GM12878 (cell line): ENCODE measurements at regions of chr14 and their contacts with region 1.

Region 1: DNA sequence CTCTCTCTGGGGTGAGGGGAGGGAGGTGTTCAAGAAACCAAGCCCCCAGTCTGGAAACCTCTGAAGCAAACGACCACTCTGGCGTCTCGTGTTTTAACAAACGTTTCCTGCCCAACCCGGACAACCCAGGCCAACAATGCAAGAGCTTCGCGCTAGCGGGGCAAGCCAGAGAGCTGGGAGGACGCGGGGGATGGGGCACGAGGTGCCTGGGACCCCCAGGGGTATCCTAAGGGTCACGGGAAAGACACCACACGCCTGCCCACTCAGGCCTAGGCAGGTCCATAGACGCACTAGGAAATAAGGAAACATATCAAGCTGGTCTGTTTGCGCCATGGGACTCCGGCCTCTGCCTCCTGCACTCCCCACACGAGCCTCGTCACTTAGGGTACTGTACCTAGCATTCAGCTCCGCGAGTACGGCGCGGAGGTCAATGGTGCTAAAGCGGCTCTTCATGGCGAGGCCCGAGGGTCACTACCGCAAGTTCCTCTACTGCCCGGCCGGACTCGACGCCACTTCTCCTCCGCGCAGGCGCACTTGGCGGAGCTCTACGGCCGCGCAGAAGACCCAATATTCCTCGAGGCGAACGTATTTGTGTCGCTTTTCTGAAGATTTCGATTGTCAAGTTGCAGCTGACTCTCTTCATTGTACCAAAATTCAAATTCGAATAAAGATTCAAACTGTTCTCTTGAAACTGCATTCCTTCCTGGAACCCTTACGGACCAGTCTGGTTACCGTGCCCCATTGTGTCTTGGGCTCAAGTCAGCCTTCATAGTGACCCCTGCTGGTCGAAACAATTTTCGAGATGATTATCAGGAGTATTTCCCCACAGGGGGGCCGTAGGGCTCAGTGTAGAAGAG is at the start of gene NEMF:
- DNase-seq: peak; percentile 92
- ATAC-seq: peak; percentile 89
- H3K4me3 ChIP-seq: peak within 1 kb of the TSS; percentile 97
- H3K27ac ChIP-seq: peak within 1 kb of the TSS; percentile 88
- H3K4me1 ChIP-seq: peaks cover 1% of the 10 kb centered on the region; the same call in 1 of the 2 replicates
- H3K27me3 ChIP-seq: no peaks in the 10 kb centered on the region
- CTCF ChIP-seq: peak; percentile 67 to 95 (median 81)
- EP300 ChIP-seq: no peak
- POLR2A ChIP-seq: peak; percentile 89
- RAD21 ChIP-seq: peak; percentile 57
- polyA plus RNA-seq, gene NEMF: 36.8 to 62.6 TPM

Region 2: GRCh38 chr14:49512147-49512551 is 340.4 kb before region 1 on chr14:
- CTCF ChIA-PET with region 1: no interaction called
- POLR2A ChIA-PET with region 1: no interaction called
- RAD21 ChIA-PET with region 1: no interaction called
- SMC1A ChIA-PET with region 1: no interaction called
- in situ Hi-C with region 1: no loop called
- intact Hi-C with region 1: no loop called
- DNase-seq: no peak
- ATAC-seq: no peak
- H3K4me3 ChIP-seq: no peak overlapping the region
- H3K27ac ChIP-seq: no peak overlapping the region
- H3K4me1 ChIP-seq: no peaks in the 10 kb centered on the region
- H3K27me3 ChIP-seq: no peaks in the 10 kb centered on the region
- CTCF ChIP-seq: no peak
- EP300 ChIP-seq: no peak
- POLR2A ChIP-seq: no peak
- RAD21 ChIP-seq: no peak

Region 3: GRCh38 chr14:49767562-49768300 is 84.8 kb before region 1 on chr14 and contains the start of gene KLHDC2:
- CTCF ChIA-PET with region 1: interaction called, 14 read pairs
- POLR2A ChIA-PET with region 1: interaction called, 5 read pairs
- RAD21 ChIA-PET with region 1: interaction called, 7 read pairs
- SMC1A ChIA-PET with region 1: interaction called, 3 read pairs
- in situ Hi-C with region 1: no loop called
- intact Hi-C with region 1: no loop called
- DNase-seq: no peak
- ATAC-seq: peak; percentile 94
- H3K4me3 ChIP-seq: peak within 1 kb of the TSS; percentile 93
- H3K27ac ChIP-seq: peak within 1 kb of the TSS; percentile 93
- H3K4me1 ChIP-seq: peaks cover 7% of the 10 kb centered on the region
- H3K27me3 ChIP-seq: no peaks in the 10 kb centered on the region
- CTCF ChIP-seq: peak in 1 of 3 experiments; percentile 54; a peak in 2 of 6 replicates
- EP300 ChIP-seq: no peak
- POLR2A ChIP-seq: peak; percentile 81
- RAD21 ChIP-seq: no peak
- polyA plus RNA-seq, gene KLHDC2: 6.0 to 13.3 TPM

Region 4: DNA sequence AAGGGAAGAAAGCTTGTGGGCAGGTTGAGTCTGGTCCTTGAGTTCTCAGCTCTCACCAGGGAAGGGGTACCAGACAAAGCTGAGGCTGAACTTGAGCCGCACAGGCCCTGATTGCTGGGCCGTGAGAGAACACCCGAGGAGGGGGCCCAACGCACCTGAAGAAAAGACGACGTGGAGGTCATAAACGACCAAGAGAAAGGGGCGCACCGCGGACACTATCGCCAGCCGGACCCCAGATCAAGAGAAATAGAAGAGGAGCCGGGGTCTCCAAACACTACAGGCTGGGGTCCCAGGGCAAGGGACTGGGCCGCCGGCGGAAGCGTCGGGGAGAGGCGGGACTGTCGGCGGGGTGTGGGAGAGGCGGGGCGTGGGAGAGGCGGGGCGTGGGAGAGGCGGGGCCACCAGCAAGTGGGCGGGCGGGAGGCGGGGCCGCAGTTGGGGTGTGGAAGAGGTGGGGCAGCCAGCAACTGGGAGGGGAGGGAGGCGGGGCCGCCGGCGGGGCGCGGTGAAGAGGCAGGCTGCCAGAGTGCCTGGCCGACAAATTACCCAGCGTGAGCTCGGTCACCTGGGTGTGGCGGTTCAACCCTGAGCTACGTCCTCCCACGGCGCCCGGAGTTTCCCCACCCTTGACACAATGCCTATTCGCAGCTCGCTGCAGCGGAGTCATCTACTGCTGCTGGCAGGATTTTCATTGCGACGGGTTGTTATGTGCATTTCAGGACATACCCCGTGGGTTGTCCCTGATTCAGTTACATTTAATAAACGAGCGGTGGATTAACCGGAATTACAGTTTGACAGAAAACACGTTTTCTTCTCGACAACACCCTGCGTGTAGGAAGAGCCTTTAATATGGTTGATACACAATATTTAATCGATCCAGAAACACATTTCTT is 15.5 kb after region 1 on chr14:
- CTCF ChIA-PET with region 1: interaction called, 196 read pairs
- POLR2A ChIA-PET with region 1: interaction called, 54 read pairs
- RAD21 ChIA-PET with region 1: interaction called, 55 read pairs
- SMC1A ChIA-PET with region 1: interaction called, 91 read pairs
- in situ Hi-C with region 1: no loop called
- intact Hi-C with region 1: no loop called
- DNase-seq: peak; percentile 92
- ATAC-seq: peak; percentile 89
- H3K4me3 ChIP-seq: peak overlapping the region; percentile 89
- H3K27ac ChIP-seq: peak overlapping the region; percentile 93
- H3K4me1 ChIP-seq: peaks cover 20% of the 10 kb centered on the region
- H3K27me3 ChIP-seq: no peaks in the 10 kb centered on the region
- CTCF ChIP-seq: no peak
- EP300 ChIP-seq: no peak
- POLR2A ChIP-seq: peak; percentile 83
- RAD21 ChIP-seq: no peak

Region 5: DNA sequence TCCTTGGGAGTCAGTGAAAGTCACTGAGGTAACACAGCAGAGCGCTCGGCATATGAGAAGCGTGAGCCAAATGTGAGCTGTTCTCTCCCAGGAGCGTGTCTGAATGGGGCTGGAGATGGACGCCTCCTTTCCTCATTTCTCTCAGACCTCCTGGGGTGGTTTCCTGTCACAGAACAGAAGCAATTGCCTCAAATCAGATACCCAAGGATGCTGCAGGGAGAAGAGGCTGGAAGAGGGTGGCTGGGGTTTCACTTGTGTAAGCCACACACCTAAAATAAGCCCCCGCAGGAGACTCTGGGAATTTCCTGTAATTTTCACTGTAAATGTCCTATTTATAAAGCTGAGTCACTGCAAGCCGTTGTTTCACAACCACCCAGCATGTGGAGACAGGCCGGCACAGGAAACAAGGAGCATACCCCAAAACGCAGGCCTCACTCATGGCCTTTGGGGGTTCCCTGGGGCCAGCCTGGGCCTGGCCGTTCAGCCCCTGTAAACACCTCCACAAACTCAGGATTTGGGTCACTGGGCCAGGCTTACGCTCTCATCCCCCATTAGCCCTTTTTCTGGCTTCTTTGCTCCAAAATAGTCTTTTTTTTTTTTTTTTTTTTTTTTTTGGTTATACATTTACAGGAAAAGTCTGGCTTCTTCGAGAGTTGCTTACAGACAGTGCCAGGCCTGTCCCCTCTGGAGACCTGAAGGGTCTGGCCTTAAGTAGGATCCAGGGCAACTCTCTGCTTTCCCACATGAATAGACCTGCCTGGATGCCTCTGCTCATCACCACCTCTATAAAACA is 208.5 kb after region 1 on chr14:
- CTCF ChIA-PET with region 1: interaction called, 11 read pairs
- POLR2A ChIA-PET with region 1: interaction called, 4 read pairs
- RAD21 ChIA-PET with region 1: interaction called, 9 read pairs
- SMC1A ChIA-PET with region 1: interaction called, 4 read pairs
- in situ Hi-C with region 1: no loop called
- intact Hi-C with region 1: no loop called
- DNase-seq: no peak
- ATAC-seq: peak; percentile 51
- H3K4me3 ChIP-seq: 0 out of 2 replicates have a peak overlapping the region, but pooled peaks have one; percentile 25
- H3K27ac ChIP-seq: peak overlapping the region; percentile 98
- H3K4me1 ChIP-seq: peaks cover 53% of the 10 kb centered on the region
- H3K27me3 ChIP-seq: no peaks in the 10 kb centered on the region
- CTCF ChIP-seq: no peak
- EP300 ChIP-seq: peak in 1 of 2 experiments; percentile 66; a peak in 2 of 4 replicates
- POLR2A ChIP-seq: no peak
- RAD21 ChIP-seq: peak; percentile 32; the same call in 1 of the 2 replicates

Region 6: DNA sequence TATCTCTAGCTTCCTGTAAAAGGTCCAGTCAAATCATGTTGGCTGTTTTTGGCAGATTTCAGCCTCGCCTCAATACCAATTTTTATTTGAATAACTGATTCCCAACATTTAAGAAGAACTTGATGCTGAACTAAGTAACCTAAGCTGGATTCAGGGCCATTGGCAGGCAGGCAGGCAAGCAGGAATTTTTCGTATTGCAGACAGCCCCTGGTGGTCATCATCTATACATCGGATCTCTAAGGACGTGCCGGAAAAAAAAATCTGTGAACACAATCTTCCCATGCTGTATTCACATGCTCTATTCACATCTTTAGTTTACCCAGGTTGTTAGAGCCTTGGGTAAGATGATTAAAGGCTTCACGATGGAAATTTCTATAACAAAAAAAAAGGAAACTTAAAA is 256.8 kb after region 1 on chr14:
- CTCF ChIA-PET with region 1: interaction called, 69 read pairs
- POLR2A ChIA-PET with region 1: interaction called, 4 read pairs
- RAD21 ChIA-PET with region 1: interaction called, 24 read pairs
- SMC1A ChIA-PET with region 1: interaction called, 33 read pairs
- in situ Hi-C with region 1: no loop called
- intact Hi-C with region 1: loop called (anchors 2 kb)
- DNase-seq: no peak
- ATAC-seq: no peak
- H3K4me3 ChIP-seq: no peak overlapping the region
- H3K27ac ChIP-seq: no peak overlapping the region
- H3K4me1 ChIP-seq: peaks cover 18% of the 10 kb centered on the region
- H3K27me3 ChIP-seq: no peaks in the 10 kb centered on the region
- CTCF ChIP-seq: no peak
- EP300 ChIP-seq: no peak
- POLR2A ChIP-seq: no peak
- RAD21 ChIP-seq: no peak

Region 7: GRCh38 chr14:50532502-50533240 is 680.1 kb after region 1 on chr14 and contains the start of gene MAP4K5:
- CTCF ChIA-PET with region 1: interaction called, 6 read pairs
- POLR2A ChIA-PET with region 1: no interaction called
- RAD21 ChIA-PET with region 1: interaction called, 3 read pairs
- SMC1A ChIA-PET with region 1: interaction called, 4 read pairs
- in situ Hi-C with region 1: loop called (anchors 5 kb)
- intact Hi-C with region 1: loop called (anchors 2 kb)
- DNase-seq: peak; percentile 40
- ATAC-seq: peak; percentile 91
- H3K4me3 ChIP-seq: peak within 1 kb of the TSS; percentile 81
- H3K27ac ChIP-seq: peak within 1 kb of the TSS; percentile 75
- H3K4me1 ChIP-seq: peaks cover 10% of the 10 kb centered on the region
- H3K27me3 ChIP-seq: no peaks in the 10 kb centered on the region
- CTCF ChIP-seq: peak; percentile 89 to 99 (median 92); a peak in 5 of 6 replicates
- EP300 ChIP-seq: 0 out of 4 replicates have a peak, but pooled peaks of 1 of the 2 experiments have one; percentile 16
- POLR2A ChIP-seq: no peak; the same call in 1 of the 2 replicates
- RAD21 ChIP-seq: peak; percentile 96
- polyA plus RNA-seq, gene MAP4K5: 9.1 to 12.0 TPM